Left lung (tissue), 14 donors: ENCODE measurements at regions of chr12 and their contacts with region 1.

Region 1: GRCh38 chr12:124767066-124767821 is 96.4 kb downstream of the SCARB1 start:
- DNase-seq: peak; percentile 73 to 98 (median 82)
- ATAC-seq: peak; percentile 85
- H3K4me3 ChIP-seq: no peak overlapping the region
- H3K27ac ChIP-seq: no peak overlapping the region
- H3K4me1 ChIP-seq: peaks cover 28 to 70% of the 10 kb centered on the region in 2 donors
- H3K27me3 ChIP-seq: peaks cover 0 to 4% of the 10 kb centered on the region in 2 donors
- CTCF ChIP-seq: peak; percentile 99 to 100

Region 2: DNA sequence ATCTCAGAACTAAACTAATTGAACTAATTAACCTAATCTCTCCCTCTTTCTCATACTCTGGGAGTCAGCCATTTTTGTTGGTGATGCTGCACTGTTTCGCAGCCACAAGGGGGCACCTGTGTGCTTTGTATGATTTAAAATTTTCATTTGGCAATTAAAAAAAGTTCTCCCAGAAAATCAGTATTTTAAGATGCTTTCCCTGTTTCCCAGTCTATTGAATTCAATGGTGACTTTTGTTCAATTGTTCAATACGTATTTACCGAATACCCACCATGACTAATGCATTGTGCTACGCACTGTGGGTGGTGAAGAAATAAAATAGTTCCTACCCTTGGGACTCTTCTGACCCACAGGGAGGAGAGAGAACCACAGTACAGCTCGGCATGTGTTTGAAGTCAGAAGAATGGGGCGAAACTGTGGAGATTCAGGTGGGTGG is 730.6 kb before region 1 on chr12:
- intact Hi-C with region 1: loop called in 1 of 2 experiments (anchors 10 kb)
- DNase-seq: peak in 2 of 4 donors; percentile 50 to 66
- ATAC-seq: peak; percentile 78
- H3K4me3 ChIP-seq: no peak overlapping the region
- H3K27ac ChIP-seq: no peak overlapping the region
- H3K4me1 ChIP-seq: peaks cover 0 to 6% of the 10 kb centered on the region in 2 donors
- H3K27me3 ChIP-seq: no peaks in the 10 kb centered on the region
- CTCF ChIP-seq: peak; percentile 86 to 88

Region 3: DNA sequence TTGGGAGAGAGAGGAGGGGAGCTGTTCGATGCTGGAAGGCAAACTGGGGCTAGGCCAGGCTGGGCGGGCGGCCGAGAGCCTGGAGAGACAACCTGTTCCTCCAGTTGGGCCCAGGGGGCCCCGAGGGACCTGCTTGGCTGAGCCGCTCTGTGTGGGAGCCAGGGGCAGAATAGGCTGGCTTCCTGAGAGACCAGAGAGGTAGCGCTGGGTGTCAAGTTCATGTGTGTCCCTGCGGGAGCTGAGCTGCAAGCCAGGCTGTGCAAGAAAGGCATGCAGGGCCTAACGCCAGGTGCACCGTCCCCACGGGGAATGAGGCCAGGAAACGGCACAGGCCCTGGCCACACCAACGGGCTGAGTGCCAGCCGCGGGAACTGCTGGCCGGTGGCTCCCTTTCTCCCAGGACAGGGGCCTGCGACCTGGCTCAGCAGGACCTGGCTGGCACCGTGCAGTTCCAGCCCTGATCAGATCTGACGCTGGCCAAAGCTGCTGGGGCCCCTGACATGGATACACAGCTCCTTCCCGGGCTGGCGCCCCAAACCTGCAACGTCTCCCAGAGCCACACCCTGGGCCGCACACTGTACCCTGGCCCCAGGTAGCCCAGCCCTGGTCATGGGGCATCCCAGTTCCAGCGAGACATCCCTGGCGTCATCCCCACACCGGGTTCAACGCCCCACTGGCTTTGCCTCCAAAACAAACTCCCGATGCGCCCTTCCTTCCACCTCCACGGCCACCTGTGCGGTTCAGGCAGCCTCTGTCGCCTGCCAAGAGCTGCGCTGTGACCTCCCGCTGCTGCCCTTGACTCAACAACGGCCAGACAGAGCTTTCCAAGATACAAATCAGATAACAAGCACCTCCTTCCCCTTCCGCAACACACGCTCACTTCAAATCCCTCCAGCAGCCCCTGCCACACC is 407.3 kb before region 1 on chr12:
- intact Hi-C with region 1: loop called in 1 of 2 experiments (anchors 10 kb)
- DNase-seq: peak in 2 of 4 donors; percentile 43 to 50
- ATAC-seq: peak; percentile 73
- H3K4me3 ChIP-seq: no peak overlapping the region
- H3K27ac ChIP-seq: no peak overlapping the region
- H3K4me1 ChIP-seq: peaks cover 0 to 21% of the 10 kb centered on the region in 2 donors
- H3K27me3 ChIP-seq: no peaks in the 10 kb centered on the region
- CTCF ChIP-seq: no peak

Region 4: GRCh38 chr12:124567661-124568373 is 199.4 kb before region 1 on chr12:
- intact Hi-C with region 1: loop called in 1 of 2 experiments (anchors 5 kb)
- DNase-seq: peak; percentile 94 to 99 (median 96)
- ATAC-seq: peak; percentile 82
- H3K4me3 ChIP-seq: peak overlapping the region in 1 of 2 donors; percentile 37
- H3K27ac ChIP-seq: peak overlapping the region; percentile 77 to 82
- H3K4me1 ChIP-seq: peaks cover 33 to 56% of the 10 kb centered on the region in 2 donors
- H3K27me3 ChIP-seq: no peaks in the 10 kb centered on the region
- CTCF ChIP-seq: peak in 1 of 2 donors; percentile 7